Breast epithelium (tissue), 4 donors: ENCODE measurements at regions of chrX and their contacts with region 1.

Region 1: GRCh38 chrX:154409222-154409871 is at the start of gene DNASE1L1:
- DNase-seq: peak in 1 of 2 donors; percentile 55
- H3K4me3 ChIP-seq: peak within 1 kb of the TSS; percentile 35 to 52 (median 37)
- H3K27ac ChIP-seq: peak within 1 kb of the TSS; percentile 48 to 72
- H3K4me1 ChIP-seq: no peaks in the 10 kb centered on the region
- H3K27me3 ChIP-seq: peaks cover 0 to 36% of the 10 kb centered on the region in 2 donors
- CTCF ChIP-seq: no peak
- POLR2A ChIP-seq: no peak
- total RNA-seq, gene DNASE1L1: 26.2 to 44.3 (median 26.9) TPM

Region 2: GRCh38 chrX:153304988-153305736 is 1104.2 kb before region 1 on chrX:
- intact Hi-C with region 1: no loop called
- DNase-seq: no peak
- H3K4me3 ChIP-seq: no peak overlapping the region
- H3K27ac ChIP-seq: no peak overlapping the region
- H3K4me1 ChIP-seq: no peaks in the 10 kb centered on the region
- H3K27me3 ChIP-seq: peaks cover 0 to 66% of the 10 kb centered on the region in 2 donors
- CTCF ChIP-seq: no peak
- POLR2A ChIP-seq: no peak

Region 3: DNA sequence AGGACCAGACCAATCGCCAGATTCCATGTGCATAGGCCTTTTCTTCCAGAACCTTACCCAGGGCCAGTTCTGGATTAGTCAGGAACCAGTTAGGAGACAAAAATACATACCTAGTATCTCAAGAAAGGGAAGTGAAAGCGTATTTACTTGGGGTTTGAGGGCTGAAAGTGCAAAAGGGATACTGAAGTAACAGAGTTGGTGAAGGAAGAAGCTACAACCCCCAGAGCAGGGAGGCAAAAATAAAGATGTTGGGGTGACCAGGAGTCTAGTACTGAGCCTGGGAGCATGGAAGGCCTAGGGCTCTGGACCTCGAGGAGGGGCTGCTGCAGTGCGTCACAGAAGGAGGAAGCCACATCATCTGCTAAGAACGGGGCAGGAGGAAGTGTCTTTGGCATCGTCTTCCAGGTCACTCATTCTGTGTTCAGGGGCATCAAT is 75.5 kb before region 1 on chrX:
- intact Hi-C with region 1: loop called (anchors 5 kb)
- DNase-seq: no peak
- H3K4me3 ChIP-seq: no peak overlapping the region
- H3K27ac ChIP-seq: no peak overlapping the region
- H3K4me1 ChIP-seq: no peaks in the 10 kb centered on the region
- H3K27me3 ChIP-seq: peaks cover 0 to 39% of the 10 kb centered on the region in 2 donors
- CTCF ChIP-seq: no peak
- POLR2A ChIP-seq: no peak

Region 4: DNA sequence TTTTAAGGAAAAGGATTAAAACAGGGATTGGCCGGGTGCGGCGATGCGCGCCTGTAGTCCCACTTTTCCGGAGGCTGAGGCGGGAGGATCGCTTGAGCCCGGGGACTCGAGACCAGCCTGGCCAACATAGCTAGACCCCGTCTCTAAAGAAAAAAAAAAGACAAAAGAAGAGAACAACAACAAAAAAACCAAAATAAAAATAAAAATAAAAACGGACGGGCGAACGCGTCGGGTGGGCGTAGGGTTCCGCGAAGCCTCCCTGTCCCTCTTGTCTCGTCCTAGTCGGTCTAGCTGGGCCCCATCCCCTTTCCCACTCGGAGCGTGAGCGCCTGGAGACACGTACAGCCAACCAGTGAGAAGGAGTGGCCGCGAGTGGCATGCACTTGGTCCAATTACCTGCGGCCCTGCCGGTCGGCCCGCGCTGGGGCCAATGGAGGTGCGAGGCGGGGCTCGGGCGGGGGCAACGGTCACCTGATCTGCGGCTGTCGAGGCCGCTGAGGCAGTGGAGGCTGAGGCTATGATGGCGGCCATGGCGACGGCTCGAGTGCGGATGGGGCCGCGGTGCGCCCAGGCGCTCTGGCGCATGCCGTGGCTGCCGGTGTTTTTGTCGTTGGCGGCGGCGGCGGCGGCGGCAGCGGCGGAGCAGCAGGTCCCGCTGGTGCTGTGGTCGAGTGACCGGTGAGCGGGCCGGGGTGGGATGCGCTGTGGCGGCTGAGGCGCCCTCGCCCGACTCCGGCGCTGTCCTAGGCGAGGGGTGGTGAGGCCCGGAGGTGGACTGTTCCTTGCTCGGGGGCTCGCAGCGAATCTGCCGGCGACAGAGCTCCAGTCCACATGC is 19.0 kb after region 1 on chrX and contains the start of gene ATP6AP1:
- intact Hi-C with region 1: no loop called
- DNase-seq: peak; percentile 91 to 92
- H3K4me3 ChIP-seq: peak within 1 kb of the TSS; percentile 71 to 83 (median 72)
- H3K27ac ChIP-seq: peak within 1 kb of the TSS; percentile 82 to 88
- H3K4me1 ChIP-seq: no peaks in the 10 kb centered on the region
- H3K27me3 ChIP-seq: peaks cover 0 to 16% of the 10 kb centered on the region in 2 donors
- CTCF ChIP-seq: no peak
- POLR2A ChIP-seq: peak; percentile 33
- total RNA-seq, gene ATP6AP1: 31.5 to 57.1 (median 34.8) TPM

Region 5: DNA sequence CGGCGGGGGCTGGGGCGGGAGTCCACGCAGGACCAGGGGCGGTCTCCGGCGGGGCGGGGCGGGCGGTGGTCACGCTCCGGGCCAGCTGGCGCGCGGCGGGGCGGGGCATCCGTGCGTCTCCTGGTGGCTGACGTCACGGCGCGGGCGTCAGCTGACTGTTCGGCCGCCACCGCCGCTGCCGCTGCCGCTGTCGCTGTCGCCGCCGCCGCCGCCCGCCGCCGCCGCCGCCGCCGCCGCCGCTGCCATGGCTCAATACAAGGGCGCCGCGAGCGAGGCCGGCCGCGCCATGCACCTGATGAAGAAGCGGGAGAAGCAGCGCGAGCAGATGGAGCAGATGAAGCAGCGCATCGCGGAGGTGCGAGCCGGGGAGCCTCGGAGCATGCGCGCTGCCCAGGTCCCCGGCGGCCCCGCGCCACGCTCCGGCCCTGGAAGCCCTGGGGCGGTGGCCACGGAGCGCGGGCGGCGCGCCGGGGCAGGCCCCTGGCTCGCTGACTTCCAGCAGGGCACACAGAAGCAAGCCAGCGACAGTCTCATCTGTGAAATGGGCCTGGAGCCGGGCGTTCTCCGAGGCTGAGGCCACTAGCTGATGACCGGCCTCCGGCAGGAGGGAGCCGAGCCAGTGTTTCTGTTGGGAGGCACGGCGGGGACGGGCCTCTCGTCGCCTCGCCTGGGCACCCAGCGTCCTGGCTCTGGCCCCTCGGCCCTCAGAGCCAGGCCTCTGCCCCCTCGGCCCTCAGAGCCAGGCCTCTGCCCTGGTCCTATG is 34.8 kb after region 1 on chrX and contains the start of gene FAM50A:
- intact Hi-C with region 1: no loop called
- DNase-seq: peak; percentile 64 to 67
- H3K4me3 ChIP-seq: peak within 1 kb of the TSS; percentile 58 to 82 (median 62)
- H3K27ac ChIP-seq: peak within 1 kb of the TSS; percentile 90
- H3K4me1 ChIP-seq: no peaks in the 10 kb centered on the region
- H3K27me3 ChIP-seq: peaks cover 0 to 57% of the 10 kb centered on the region in 2 donors
- CTCF ChIP-seq: peak in 1 of 3 donors; percentile 10
- POLR2A ChIP-seq: no peak
- total RNA-seq, gene FAM50A: 30.7 to 94.4 (median 64.2) TPM